Calu3 (cell line): ENCODE measurements at regions of chr4 and their contacts with region 1.

Region 1: DNA sequence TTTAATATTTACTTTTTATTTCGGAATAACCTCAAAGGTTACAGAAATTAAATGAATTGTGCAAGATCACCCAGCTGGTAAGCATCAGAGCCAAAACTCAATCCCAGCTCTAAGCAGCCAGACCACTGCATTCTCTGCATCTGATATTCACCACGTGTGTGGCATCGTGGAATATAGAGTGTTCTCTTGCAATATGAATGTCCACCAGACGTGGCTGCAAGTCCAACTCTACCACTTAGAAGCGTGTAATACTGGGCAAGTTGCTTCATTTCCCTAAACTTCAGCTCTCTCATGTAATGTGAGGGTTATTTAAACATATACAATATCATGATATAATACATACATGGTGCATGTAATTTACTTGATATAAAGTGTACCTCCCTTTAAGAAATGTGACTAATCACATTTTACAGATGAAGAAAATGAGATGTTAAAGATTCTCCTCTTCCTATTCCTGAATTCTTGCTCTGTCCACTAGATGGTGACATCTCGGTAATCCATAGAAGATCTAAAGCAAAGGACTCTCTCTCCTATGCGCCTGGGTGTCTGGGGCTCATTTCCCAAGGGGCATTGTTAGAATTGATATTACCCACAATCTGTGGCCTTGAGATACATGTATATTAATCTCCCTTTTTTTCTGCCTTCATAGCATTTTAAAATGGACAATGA is 805.1 kb downstream of the RAB28 start:
- DNase-seq: no peak
- H3K4me3 Mint-ChIP-seq: no peak overlapping the region
- H3K27ac Mint-ChIP-seq: no peak overlapping the region
- H3K4me1 Mint-ChIP-seq: no peaks in the 10 kb centered on the region
- H3K27me3 Mint-ChIP-seq: no peaks in the 10 kb centered on the region
- CTCF ChIP-seq: peak; percentile 17

Region 2: GRCh38 chr4:12716896-12717295 is 37.8 kb after region 1 on chr4:
- CTCF ChIA-PET with region 1: no interaction called
- intact Hi-C with region 1: loop called (anchors 2 kb)
- DNase-seq: no peak
- H3K4me3 Mint-ChIP-seq: no peak overlapping the region
- H3K27ac Mint-ChIP-seq: no peak overlapping the region
- H3K4me1 Mint-ChIP-seq: no peaks in the 10 kb centered on the region
- H3K27me3 Mint-ChIP-seq: no peaks in the 10 kb centered on the region
- CTCF ChIP-seq: no peak

Region 3: GRCh38 chr4:12729384-12729783 is 50.3 kb after region 1 on chr4:
- CTCF ChIA-PET with region 1: no interaction called
- intact Hi-C with region 1: loop called (anchors 1 kb)
- DNase-seq: no peak
- H3K4me3 Mint-ChIP-seq: no peak overlapping the region
- H3K27ac Mint-ChIP-seq: no peak overlapping the region
- H3K4me1 Mint-ChIP-seq: no peaks in the 10 kb centered on the region
- H3K27me3 Mint-ChIP-seq: peaks cover 15% of the 10 kb centered on the region
- CTCF ChIP-seq: no peak

Region 4: GRCh38 chr4:12911750-12912358 is 232.8 kb after region 1 on chr4:
- CTCF ChIA-PET with region 1: no interaction called
- intact Hi-C with region 1: no loop called
- DNase-seq: no peak
- H3K4me3 Mint-ChIP-seq: no peak overlapping the region
- H3K27ac Mint-ChIP-seq: no peak overlapping the region
- H3K4me1 Mint-ChIP-seq: no peaks in the 10 kb centered on the region
- H3K27me3 Mint-ChIP-seq: no peaks in the 10 kb centered on the region
- CTCF ChIP-seq: no peak